Right ventricle myocardium inferior (tissue), 1 donor: ENCODE measurements at regions of chr4 and their contacts with region 1.

Region 1: GRCh38 chr4:138870737-138871554 is 144.6 kb upstream of the NOCT start:
- DNase-seq: no peak
- ATAC-seq: peak; percentile 53

Region 2: GRCh38 chr4:137819964-137820383 is 1051.0 kb before region 1 on chr4:
- intact Hi-C with region 1: loop called (anchors 5 kb)
- DNase-seq: no peak
- ATAC-seq: no peak

Region 3: DNA sequence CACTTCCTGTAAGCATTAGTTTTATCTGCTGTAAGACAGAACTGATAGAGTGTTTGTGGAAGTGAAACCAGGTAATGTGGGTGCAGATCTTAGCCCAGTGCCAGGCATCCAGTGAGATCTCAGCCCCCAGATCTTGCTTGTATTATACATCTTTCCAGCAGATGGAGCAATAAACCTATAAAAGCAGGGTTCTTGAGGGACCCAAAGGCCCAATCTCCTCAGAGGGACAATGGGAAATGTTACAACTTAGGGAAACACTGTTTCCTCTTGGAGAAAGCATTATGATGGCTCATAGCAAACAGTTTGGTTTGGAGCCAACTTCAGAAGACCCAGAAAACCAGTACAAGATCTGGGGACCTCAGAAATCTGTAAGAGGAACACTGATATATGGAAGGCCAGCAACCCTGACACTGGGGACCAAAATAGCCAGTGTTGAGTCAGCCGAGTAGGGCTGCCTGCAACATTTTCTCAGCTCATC is 835.1 kb before region 1 on chr4:
- intact Hi-C with region 1: loop called (anchors 5 kb)
- DNase-seq: no peak
- ATAC-seq: peak; percentile 80

Region 4: DNA sequence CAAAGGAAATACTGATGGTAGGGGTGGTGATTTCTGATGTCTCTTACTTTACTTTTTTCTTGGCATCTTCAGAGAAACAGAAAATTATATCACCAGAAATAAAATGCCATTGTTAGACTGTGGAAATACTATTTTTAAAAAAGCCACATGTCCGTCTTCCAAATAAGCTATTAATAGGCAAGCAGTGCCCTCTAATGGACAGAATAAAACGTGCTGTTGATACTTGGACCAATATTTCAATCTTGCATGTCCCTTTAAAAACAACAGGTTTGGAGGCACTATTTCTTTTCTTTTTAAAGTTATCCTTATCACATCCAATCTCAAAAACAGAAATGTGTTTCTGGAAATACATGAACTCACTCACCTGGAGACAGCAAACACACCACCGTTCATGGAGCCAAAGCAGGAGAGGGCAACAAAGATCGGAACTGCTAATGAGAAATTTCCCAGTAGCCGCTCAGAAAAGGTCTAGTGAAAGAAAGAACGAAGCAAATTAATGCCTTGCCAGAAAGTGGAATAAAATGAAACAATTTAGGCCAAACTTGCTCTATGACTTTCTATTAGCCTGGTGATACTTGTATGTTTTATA is 688.0 kb before region 1 on chr4:
- intact Hi-C with region 1: loop called (anchors 2 kb)
- DNase-seq: no peak
- ATAC-seq: peak; percentile 44

Region 5: GRCh38 chr4:138405934-138406567 is 464.9 kb before region 1 on chr4:
- intact Hi-C with region 1: loop called (anchors 10 kb)
- DNase-seq: no peak
- ATAC-seq: no peak

Region 6: GRCh38 chr4:138919094-138919936 is 48.4 kb after region 1 on chr4:
- intact Hi-C with region 1: loop called (anchors 5 kb)
- DNase-seq: peak; percentile 85
- ATAC-seq: peak; percentile 93

Region 7: DNA sequence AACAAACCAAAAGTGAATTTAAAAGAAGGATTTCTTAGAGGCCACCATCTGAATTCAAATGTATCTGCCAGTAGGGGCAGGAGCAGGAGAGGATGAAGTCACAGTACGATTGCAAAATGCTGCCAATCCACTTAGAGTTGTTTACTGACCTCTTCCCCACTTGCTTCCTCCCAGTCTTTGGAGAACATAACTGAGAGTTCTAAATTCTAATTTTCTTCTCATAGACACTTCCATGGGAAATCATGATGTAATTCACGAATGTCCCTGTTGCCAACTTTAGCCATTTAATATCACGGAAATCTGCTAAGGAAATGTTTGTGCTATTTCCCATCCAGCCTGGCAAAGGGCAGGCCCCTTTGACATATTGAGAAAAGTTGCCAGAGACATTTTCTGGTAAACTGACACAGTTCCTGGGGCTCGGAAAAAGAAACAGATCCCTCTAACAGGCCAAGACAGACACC is 111.0 kb after region 1 on chr4:
- intact Hi-C with region 1: no loop called
- DNase-seq: no peak
- ATAC-seq: peak; percentile 94